ENCODE measurements at regions of chr14 and their contacts with region 1.

Region 1: DNA sequence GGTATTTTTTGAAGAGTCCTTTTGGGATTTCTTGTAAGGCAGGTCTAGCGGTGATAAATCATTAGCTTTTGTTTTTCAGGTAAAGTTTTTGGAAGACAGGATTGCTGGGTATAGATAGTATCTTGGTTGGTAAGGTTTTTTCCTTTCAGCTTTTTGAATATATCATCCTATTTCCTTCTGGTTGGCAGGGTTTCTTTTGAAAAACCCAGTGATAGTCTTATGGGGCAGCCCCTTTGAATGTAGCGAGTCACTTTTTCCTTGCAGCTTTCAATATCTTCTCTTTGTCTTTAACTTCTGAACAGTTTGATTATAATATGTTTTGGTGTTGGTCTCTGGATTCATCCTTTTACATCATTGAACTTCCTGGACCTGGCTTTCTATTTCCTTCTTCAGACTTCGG is 20.2 kb downstream of the TMX1 start:
- DNase-seq: no peak
- H3K4me3 ChIP-seq: no peak overlapping the region
- H3K27ac ChIP-seq: no peak overlapping the region
- H3K4me1 ChIP-seq: no peaks in the 10 kb centered on the region
- H3K27me3 ChIP-seq: no peaks in the 10 kb centered on the region
- CTCF ChIP-seq: no peak
- EP300 ChIP-seq: no peak
- POLR2A ChIP-seq: no peak

Region 2: GRCh38 chr14:51929166-51929565 is 668.9 kb after region 1 on chr14:
- intact Hi-C with region 1: loop called in 1 of 4 experiments (anchors 5 kb)
- DNase-seq: no peak
- H3K4me3 ChIP-seq: no peak overlapping the region
- H3K27ac ChIP-seq: no peak overlapping the region
- H3K4me1 ChIP-seq: no peaks in the 10 kb centered on the region
- H3K27me3 ChIP-seq: no peaks in the 10 kb centered on the region
- CTCF ChIP-seq: no peak
- EP300 ChIP-seq: no peak
- POLR2A ChIP-seq: no peak

Measured in ovary (tissue), 10 donors.